CD4-positive, alpha-beta T cell (primary cell): ENCODE measurements at regions of chr1 and their contacts with region 1.

Region 1: GRCh38 chr1:155562581-155563376 is at the start of gene ASH1L:
- DNase-seq: peak; percentile 89 to 96 (median 92)
- ATAC-seq: peak; percentile 71
- H3K4me3 ChIP-seq: peak within 1 kb of the TSS; percentile 81
- H3K4me3 Mint-ChIP-seq: peak within 1 kb of the TSS; percentile 99
- H3K27ac ChIP-seq: peak within 1 kb of the TSS; percentile 95 to 96
- H3K27ac Mint-ChIP-seq: peak within 1 kb of the TSS; percentile 94
- H3K4me1 ChIP-seq: peaks cover 39% of the 10 kb centered on the region
- H3K4me1 Mint-ChIP-seq: peaks cover 51% of the 10 kb centered on the region
- H3K27me3 ChIP-seq: no peaks in the 10 kb centered on the region
- H3K27me3 Mint-ChIP-seq: no peaks in the 10 kb centered on the region
- CTCF ChIP-seq: no peak
- total RNA-seq, gene ASH1L: 71.0 to 72.8 TPM

Region 2: GRCh38 chr1:155323798-155324610 is 238.8 kb before region 1 on chr1:
- CTCF ChIA-PET with region 1: interaction called, 3 read pairs
- POLR2A ChIA-PET with region 1: interaction called, 7 read pairs
- intact Hi-C with region 1: loop called in 1 of 2 experiments (anchors 2 kb)
- DNase-seq: peak; percentile 69 to 94 (median 80)
- ATAC-seq: peak; percentile 79
- H3K4me3 ChIP-seq: peak overlapping the region; percentile 100
- H3K4me3 Mint-ChIP-seq: peak overlapping the region; percentile 92
- H3K27ac ChIP-seq: peak overlapping the region; percentile 93 to 97
- H3K27ac Mint-ChIP-seq: peak overlapping the region; percentile 69
- H3K4me1 ChIP-seq: peaks cover 49% of the 10 kb centered on the region
- H3K4me1 Mint-ChIP-seq: peaks cover 46% of the 10 kb centered on the region
- H3K27me3 ChIP-seq: no peaks in the 10 kb centered on the region
- H3K27me3 Mint-ChIP-seq: no peaks in the 10 kb centered on the region
- CTCF ChIP-seq: no peak

Region 3: GRCh38 chr1:155513300-155513916 is 49.4 kb before region 1 on chr1:
- CTCF ChIA-PET with region 1: no interaction called
- POLR2A ChIA-PET with region 1: interaction called, 5 read pairs
- intact Hi-C with region 1: loop called (anchors 5 to 10 kb)
- DNase-seq: peak in 2 of 14 experiments; percentile 24 to 32
- ATAC-seq: no peak
- H3K4me3 ChIP-seq: no peak overlapping the region
- H3K4me3 Mint-ChIP-seq: no peak overlapping the region
- H3K27ac ChIP-seq: no peak overlapping the region
- H3K27ac Mint-ChIP-seq: peak overlapping the region; percentile 82
- H3K4me1 ChIP-seq: peaks cover 20% of the 10 kb centered on the region
- H3K4me1 Mint-ChIP-seq: peaks cover 61% of the 10 kb centered on the region
- H3K27me3 ChIP-seq: no peaks in the 10 kb centered on the region
- H3K27me3 Mint-ChIP-seq: no peaks in the 10 kb centered on the region
- CTCF ChIP-seq: no peak

Region 4: GRCh38 chr1:155540000-155540874 is 22.5 kb before region 1 on chr1:
- CTCF ChIA-PET with region 1: interaction called, 4 read pairs
- POLR2A ChIA-PET with region 1: interaction called, 14 read pairs
- intact Hi-C with region 1: no loop called
- DNase-seq: no peak
- ATAC-seq: no peak
- H3K4me3 ChIP-seq: no peak overlapping the region
- H3K4me3 Mint-ChIP-seq: peak overlapping the region; percentile 34
- H3K27ac ChIP-seq: peak overlapping the region; percentile 11 to 16
- H3K27ac Mint-ChIP-seq: peak overlapping the region; percentile 71
- H3K4me1 ChIP-seq: peaks cover 56% of the 10 kb centered on the region
- H3K4me1 Mint-ChIP-seq: peaks cover 55% of the 10 kb centered on the region
- H3K27me3 ChIP-seq: no peaks in the 10 kb centered on the region
- H3K27me3 Mint-ChIP-seq: no peaks in the 10 kb centered on the region
- CTCF ChIP-seq: no peak

Region 5: GRCh38 chr1:155609515-155610256 is 46.9 kb after region 1 on chr1 and contains the start of gene MSTO1:
- CTCF ChIA-PET with region 1: no interaction called
- POLR2A ChIA-PET with region 1: interaction called, 3 read pairs
- intact Hi-C with region 1: loop called in 1 of 2 experiments (anchors 5 kb)
- DNase-seq: peak; percentile 81 to 97 (median 88)
- ATAC-seq: peak; percentile 97
- H3K4me3 ChIP-seq: peak within 1 kb of the TSS; percentile 76
- H3K4me3 Mint-ChIP-seq: peak within 1 kb of the TSS; percentile 94
- H3K27ac ChIP-seq: peak within 1 kb of the TSS; percentile 61 to 69
- H3K27ac Mint-ChIP-seq: peak within 1 kb of the TSS; percentile 79
- H3K4me1 ChIP-seq: peaks cover 6% of the 10 kb centered on the region
- H3K4me1 Mint-ChIP-seq: no peaks in the 10 kb centered on the region
- H3K27me3 ChIP-seq: no peaks in the 10 kb centered on the region
- H3K27me3 Mint-ChIP-seq: no peaks in the 10 kb centered on the region
- CTCF ChIP-seq: no peak
- total RNA-seq, gene MSTO1: 65.9 to 69.6 TPM

Region 6: GRCh38 chr1:155688324-155689080 is 125.7 kb after region 1 on chr1 and contains the start of gene YY1AP1:
- CTCF ChIA-PET with region 1: no interaction called
- POLR2A ChIA-PET with region 1: no interaction called
- intact Hi-C with region 1: loop called in 1 of 2 experiments (anchors 10 kb)
- DNase-seq: peak; percentile 80 to 94 (median 89)
- ATAC-seq: peak; percentile 85
- H3K4me3 ChIP-seq: peak within 1 kb of the TSS; percentile 73
- H3K4me3 Mint-ChIP-seq: peak within 1 kb of the TSS; percentile 98
- H3K27ac ChIP-seq: peak within 1 kb of the TSS; percentile 89 to 92
- H3K27ac Mint-ChIP-seq: peak within 1 kb of the TSS; percentile 95
- H3K4me1 ChIP-seq: peaks cover 31% of the 10 kb centered on the region
- H3K4me1 Mint-ChIP-seq: peaks cover 46% of the 10 kb centered on the region
- H3K27me3 ChIP-seq: no peaks in the 10 kb centered on the region
- H3K27me3 Mint-ChIP-seq: no peaks in the 10 kb centered on the region
- CTCF ChIP-seq: no peak
- total RNA-seq, gene YY1AP1: 71.1 to 81.2 TPM